Stomach (tissue), 19 donors: ENCODE measurements at regions of chr18 and their contacts with region 1.

Region 1: GRCh38 chr18:54119524-54120019 is 104.9 kb downstream of the MBD2 start:
- DNase-seq: peak in 1 of 2 donors; percentile 81
- H3K4me3 ChIP-seq: no peak overlapping the region
- H3K27ac ChIP-seq: no peak overlapping the region
- H3K4me1 ChIP-seq: peaks cover 0 to 7% (median 5%) of the 10 kb centered on the region in 4 donors
- H3K27me3 ChIP-seq: no peaks in the 10 kb centered on the region
- CTCF ChIP-seq: peak in 5 of 7 experiments; percentile 59 to 70 (median 68)
- EP300 ChIP-seq: no peak
- POLR2A ChIP-seq: no peak

Region 2: DNA sequence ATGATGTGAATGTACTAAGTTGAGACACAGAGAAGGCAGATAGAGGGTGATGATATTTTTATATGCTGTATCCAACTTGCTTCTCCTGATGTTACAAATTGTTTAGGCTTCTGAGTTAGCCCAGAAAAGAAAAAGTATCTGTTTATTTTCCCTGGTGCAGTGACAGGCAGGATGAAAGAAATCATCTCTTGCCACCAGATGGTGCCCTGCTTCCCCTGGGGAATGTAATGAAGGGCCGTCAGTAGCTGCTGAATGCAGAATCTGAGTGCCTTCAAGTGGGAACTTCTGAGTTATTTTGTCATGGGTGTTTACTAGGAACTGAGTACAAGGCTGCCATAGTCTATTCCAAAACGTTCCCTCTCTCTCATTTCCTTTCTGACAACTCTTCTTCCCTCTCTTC is 420.7 kb before region 1 on chr18:
- intact Hi-C with region 1: loop called (anchors 10 kb)
- DNase-seq: peak; percentile 52 to 68
- H3K4me3 ChIP-seq: no peak overlapping the region
- H3K27ac ChIP-seq: no peak overlapping the region
- H3K4me1 ChIP-seq: peaks cover 0 to 9% (median 0%) of the 10 kb centered on the region in 4 donors
- H3K27me3 ChIP-seq: no peaks in the 10 kb centered on the region
- CTCF ChIP-seq: peak in 4 of 7 experiments; percentile 40 to 62 (median 50)
- EP300 ChIP-seq: no peak
- POLR2A ChIP-seq: no peak

Region 3: GRCh38 chr18:54330768-54331548 is 211.4 kb after region 1 on chr18:
- intact Hi-C with region 1: no loop called
- DNase-seq: no peak
- H3K4me3 ChIP-seq: no peak overlapping the region
- H3K27ac ChIP-seq: no peak overlapping the region
- H3K4me1 ChIP-seq: no peaks in the 10 kb centered on the region
- H3K27me3 ChIP-seq: no peaks in the 10 kb centered on the region
- CTCF ChIP-seq: no peak
- EP300 ChIP-seq: no peak
- POLR2A ChIP-seq: no peak